ENCODE measurements at regions of chr5 and their contacts with region 1.

Region 1: GRCh38 chr5:66814146-66814991 is 218.2 kb downstream of the MAST4 start:
- DNase-seq: peak; percentile 31 to 60 (median 35)
- H3K4me3 ChIP-seq: no peak overlapping the region
- H3K27ac ChIP-seq: no peak overlapping the region
- H3K4me1 ChIP-seq: no peaks in the 10 kb centered on the region
- H3K27me3 ChIP-seq: no peaks in the 10 kb centered on the region
- CTCF ChIP-seq: peak; percentile 57 to 71 (median 64)
- POLR2A ChIP-seq: no peak

Region 2: DNA sequence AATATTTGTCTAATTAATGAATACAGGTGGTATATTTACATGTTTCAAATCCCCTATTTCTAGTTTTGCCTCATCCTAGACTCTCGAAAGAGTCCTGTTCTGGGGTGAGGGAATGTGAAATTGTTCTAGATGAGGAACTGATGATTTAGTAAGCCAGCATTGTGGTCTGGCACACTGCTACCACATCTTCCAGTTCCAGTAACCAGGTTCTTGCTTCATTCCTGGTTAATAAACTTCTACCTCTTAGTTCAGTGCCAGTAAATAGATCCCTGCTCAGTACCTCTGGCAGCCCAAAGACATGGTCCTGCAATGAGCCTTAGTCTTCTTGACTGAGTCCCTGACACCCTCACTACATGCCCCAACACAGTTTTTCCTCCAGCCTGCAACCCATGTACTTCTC is 462.6 kb before region 1 on chr5:
- intact Hi-C with region 1: no loop called
- DNase-seq: no peak
- H3K4me3 ChIP-seq: no peak overlapping the region
- H3K27ac ChIP-seq: no peak overlapping the region
- H3K4me1 ChIP-seq: no peaks in the 10 kb centered on the region
- H3K27me3 ChIP-seq: no peaks in the 10 kb centered on the region
- CTCF ChIP-seq: no peak
- POLR2A ChIP-seq: no peak

Region 3: GRCh38 chr5:66864331-66864840 is 50.0 kb after region 1 on chr5:
- intact Hi-C with region 1: loop called in 1 of 2 experiments (anchors 10 kb)
- DNase-seq: peak in 2 of 7 donors; percentile 21 to 36
- H3K4me3 ChIP-seq: no peak overlapping the region
- H3K27ac ChIP-seq: no peak overlapping the region
- H3K4me1 ChIP-seq: peaks cover 6 to 7% of the 10 kb centered on the region in 2 donors
- H3K27me3 ChIP-seq: no peaks in the 10 kb centered on the region
- CTCF ChIP-seq: peak; percentile 9 to 55 (median 32)
- POLR2A ChIP-seq: no peak

Region 4: DNA sequence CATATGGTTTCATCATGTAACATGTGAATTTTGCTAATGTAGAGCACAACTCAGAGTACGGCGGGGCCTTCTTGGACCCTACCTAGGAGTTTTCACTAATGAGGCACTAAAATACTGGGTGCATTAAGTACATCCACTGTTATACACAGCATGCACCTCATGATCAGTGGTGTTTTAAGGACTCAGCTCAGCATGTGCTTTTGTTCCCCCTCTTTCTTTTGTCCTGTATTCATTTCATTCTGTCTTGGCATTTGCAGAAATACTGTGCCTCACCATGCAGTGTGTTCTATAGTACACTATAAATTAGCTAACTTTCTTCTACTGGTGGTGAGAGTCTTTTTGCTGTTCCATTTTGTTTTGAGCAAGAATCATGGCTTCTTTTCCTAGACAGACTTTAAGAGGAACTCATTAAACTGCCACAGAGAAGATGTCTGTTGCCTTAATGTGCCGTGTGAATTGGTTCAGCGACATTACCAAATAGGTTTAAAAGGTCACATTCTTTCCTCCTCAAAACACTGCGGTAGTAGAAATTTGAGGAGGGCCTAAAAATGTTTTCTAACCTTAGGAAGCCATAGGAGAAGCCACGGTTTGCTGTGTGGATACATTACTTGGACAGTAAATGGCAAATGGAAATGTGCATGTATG is 58.4 kb after region 1 on chr5:
- intact Hi-C with region 1: loop called (anchors 5 to 10 kb)
- DNase-seq: no peak
- H3K4me3 ChIP-seq: no peak overlapping the region
- H3K27ac ChIP-seq: no peak overlapping the region
- H3K4me1 ChIP-seq: no peaks in the 10 kb centered on the region
- H3K27me3 ChIP-seq: no peaks in the 10 kb centered on the region
- CTCF ChIP-seq: no peak
- POLR2A ChIP-seq: no peak

Region 5: DNA sequence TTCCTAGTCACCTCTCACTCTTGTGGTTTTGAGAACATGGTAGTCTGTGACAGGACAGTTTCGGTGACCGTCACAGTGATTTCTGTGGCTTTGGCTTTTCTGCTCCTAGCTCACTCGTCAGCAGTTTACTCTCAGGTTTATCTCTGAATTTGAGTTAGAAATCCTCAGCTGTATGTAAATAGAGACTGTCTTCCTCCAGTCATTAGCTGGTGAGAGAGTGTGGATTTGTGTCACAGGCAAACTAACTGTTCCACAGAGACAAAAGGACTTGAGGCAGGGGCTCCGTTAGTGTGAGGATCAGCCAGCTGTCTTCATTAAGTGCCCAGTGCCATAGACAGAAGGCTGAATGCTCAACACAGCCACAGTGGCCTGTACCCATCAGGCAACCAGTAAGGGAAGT is 250.9 kb after region 1 on chr5:
- intact Hi-C with region 1: loop called in 1 of 2 experiments (anchors 10 kb)
- DNase-seq: no peak
- H3K4me3 ChIP-seq: no peak overlapping the region
- H3K27ac ChIP-seq: no peak overlapping the region
- H3K4me1 ChIP-seq: no peaks in the 10 kb centered on the region
- H3K27me3 ChIP-seq: no peaks in the 10 kb centered on the region
- CTCF ChIP-seq: no peak
- POLR2A ChIP-seq: no peak

Region 6: GRCh38 chr5:67156976-67157583 is 342.7 kb after region 1 on chr5:
- intact Hi-C with region 1: loop called in 1 of 2 experiments (anchors 10 kb)
- DNase-seq: peak in 1 of 7 donors; percentile 28
- H3K4me3 ChIP-seq: no peak overlapping the region
- H3K27ac ChIP-seq: no peak overlapping the region
- H3K4me1 ChIP-seq: no peaks in the 10 kb centered on the region
- H3K27me3 ChIP-seq: no peaks in the 10 kb centered on the region
- CTCF ChIP-seq: peak; percentile 47 to 78 (median 62)
- POLR2A ChIP-seq: no peak

Region 7: GRCh38 chr5:67209142-67209771 is 394.9 kb after region 1 on chr5:
- intact Hi-C with region 1: loop called in 1 of 2 experiments (anchors 10 kb)
- DNase-seq: peak; percentile 77 to 86 (median 81)
- H3K4me3 ChIP-seq: no peak overlapping the region
- H3K27ac ChIP-seq: no peak overlapping the region
- H3K4me1 ChIP-seq: no peaks in the 10 kb centered on the region
- H3K27me3 ChIP-seq: no peaks in the 10 kb centered on the region
- CTCF ChIP-seq: peak; percentile 48 to 91 (median 80)
- POLR2A ChIP-seq: no peak

Region 8: GRCh38 chr5:67287510-67288268 is 473.3 kb after region 1 on chr5:
- intact Hi-C with region 1: no loop called
- DNase-seq: no peak
- H3K4me3 ChIP-seq: no peak overlapping the region
- H3K27ac ChIP-seq: peak overlapping the region in 1 of 5 donors; percentile 30
- H3K4me1 ChIP-seq: peaks cover 0 to 15% of the 10 kb centered on the region in 2 donors
- H3K27me3 ChIP-seq: no peaks in the 10 kb centered on the region
- CTCF ChIP-seq: no peak
- POLR2A ChIP-seq: no peak